Caco-2 (cell line): ENCODE measurements at regions of chr2 and their contacts with region 1.

Region 1: GRCh38 chr2:159209341-159210306 is 76.9 kb downstream of the WDSUB1 start:
- DNase-seq: no peak
- H3K4me3 ChIP-seq: no peak overlapping the region
- H3K4me3 Mint-ChIP-seq: no peak overlapping the region
- H3K27ac Mint-ChIP-seq: peak overlapping the region; percentile 32
- H3K4me1 ChIP-seq: peaks cover 26% of the 10 kb centered on the region
- H3K4me1 Mint-ChIP-seq: peaks cover 15% of the 10 kb centered on the region
- H3K27me3 ChIP-seq: no peaks in the 10 kb centered on the region
- H3K27me3 Mint-ChIP-seq: no peaks in the 10 kb centered on the region
- CTCF ChIP-seq: no peak

Region 2: GRCh38 chr2:158879229-158879916 is 330.3 kb before region 1 on chr2:
- CTCF ChIA-PET with region 1: no interaction called
- POLR2A ChIA-PET with region 1: no interaction called
- intact Hi-C with region 1: no loop called
- DNase-seq: no peak
- H3K4me3 ChIP-seq: no peak overlapping the region
- H3K4me3 Mint-ChIP-seq: no peak overlapping the region
- H3K27ac Mint-ChIP-seq: no peak overlapping the region
- H3K4me1 ChIP-seq: no peaks in the 10 kb centered on the region
- H3K4me1 Mint-ChIP-seq: peaks cover 11% of the 10 kb centered on the region
- H3K27me3 ChIP-seq: no peaks in the 10 kb centered on the region
- H3K27me3 Mint-ChIP-seq: no peaks in the 10 kb centered on the region
- CTCF ChIP-seq: no peak

Region 3: GRCh38 chr2:159243529-159243928 is 33.9 kb after region 1 on chr2:
- CTCF ChIA-PET with region 1: no interaction called
- POLR2A ChIA-PET with region 1: no interaction called
- intact Hi-C with region 1: loop called (anchors 2 kb)
- DNase-seq: no peak
- H3K4me3 ChIP-seq: no peak overlapping the region
- H3K4me3 Mint-ChIP-seq: no peak overlapping the region
- H3K27ac Mint-ChIP-seq: no peak overlapping the region
- H3K4me1 ChIP-seq: peaks cover 9% of the 10 kb centered on the region
- H3K4me1 Mint-ChIP-seq: peaks cover 14% of the 10 kb centered on the region
- H3K27me3 ChIP-seq: no peaks in the 10 kb centered on the region
- H3K27me3 Mint-ChIP-seq: no peaks in the 10 kb centered on the region
- CTCF ChIP-seq: no peak

Region 4: DNA sequence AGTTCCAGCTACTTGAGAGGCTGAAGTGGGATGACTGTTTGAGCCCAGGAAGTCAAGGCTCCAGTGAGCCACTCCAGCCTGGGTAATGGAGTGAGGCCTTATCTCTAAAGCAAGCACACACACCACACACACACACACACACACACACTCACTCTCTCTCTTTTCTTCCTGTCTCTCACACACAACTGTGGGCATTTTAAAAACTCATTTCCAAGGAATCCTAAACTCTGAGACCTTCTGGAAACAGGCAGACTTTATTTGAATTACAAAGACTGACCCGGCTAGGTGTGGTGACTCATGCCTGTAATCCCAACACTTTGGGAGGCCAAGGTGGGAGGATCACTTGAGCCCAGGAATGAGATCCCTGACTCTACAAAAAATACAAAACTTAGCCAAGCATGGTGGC is 55.5 kb after region 1 on chr2:
- CTCF ChIA-PET with region 1: no interaction called
- POLR2A ChIA-PET with region 1: no interaction called
- intact Hi-C with region 1: loop called (anchors 5 kb)
- DNase-seq: no peak
- H3K4me3 ChIP-seq: no peak overlapping the region
- H3K4me3 Mint-ChIP-seq: no peak overlapping the region
- H3K27ac Mint-ChIP-seq: peak overlapping the region; percentile 20
- H3K4me1 ChIP-seq: peaks cover 9% of the 10 kb centered on the region
- H3K4me1 Mint-ChIP-seq: peaks cover 29% of the 10 kb centered on the region
- H3K27me3 ChIP-seq: no peaks in the 10 kb centered on the region
- H3K27me3 Mint-ChIP-seq: no peaks in the 10 kb centered on the region
- CTCF ChIP-seq: no peak